ENCODE measurements at regions of chr6 and their contacts with region 1.

Region 1: DNA sequence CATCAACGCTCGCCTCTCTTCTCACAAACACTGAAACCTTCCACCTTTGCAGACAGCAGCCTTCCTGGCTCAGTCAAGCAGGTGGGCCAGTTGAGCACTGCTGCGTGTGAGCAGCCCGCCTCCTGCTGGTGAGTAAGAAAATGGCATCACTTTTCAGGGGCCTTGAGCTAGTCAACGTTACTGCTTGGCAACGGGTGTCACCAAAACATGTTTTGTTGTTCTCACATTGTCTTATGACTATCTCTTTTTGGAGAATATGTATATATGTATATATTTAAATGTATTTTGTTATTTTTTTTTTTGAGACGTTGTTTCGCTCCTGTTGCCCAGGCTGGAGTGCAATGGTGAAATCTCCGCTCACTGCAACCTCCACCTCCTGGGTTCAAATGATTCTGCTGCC is 97.0 kb upstream of the AGPAT4 start:
- DNase-seq: peak; percentile 71
- ATAC-seq: peak; percentile 81
- H3K4me3 ChIP-seq: no peak overlapping the region
- H3K27ac ChIP-seq: no peak overlapping the region
- H3K4me1 ChIP-seq: no peaks in the 10 kb centered on the region
- H3K27me3 ChIP-seq: no peaks in the 10 kb centered on the region
- CTCF ChIP-seq: peak; percentile 94
- POLR2A ChIP-seq: peak; percentile 29; the same call in 1 of the 2 replicates
- RAD21 ChIP-seq: peak; percentile 96

Region 2: DNA sequence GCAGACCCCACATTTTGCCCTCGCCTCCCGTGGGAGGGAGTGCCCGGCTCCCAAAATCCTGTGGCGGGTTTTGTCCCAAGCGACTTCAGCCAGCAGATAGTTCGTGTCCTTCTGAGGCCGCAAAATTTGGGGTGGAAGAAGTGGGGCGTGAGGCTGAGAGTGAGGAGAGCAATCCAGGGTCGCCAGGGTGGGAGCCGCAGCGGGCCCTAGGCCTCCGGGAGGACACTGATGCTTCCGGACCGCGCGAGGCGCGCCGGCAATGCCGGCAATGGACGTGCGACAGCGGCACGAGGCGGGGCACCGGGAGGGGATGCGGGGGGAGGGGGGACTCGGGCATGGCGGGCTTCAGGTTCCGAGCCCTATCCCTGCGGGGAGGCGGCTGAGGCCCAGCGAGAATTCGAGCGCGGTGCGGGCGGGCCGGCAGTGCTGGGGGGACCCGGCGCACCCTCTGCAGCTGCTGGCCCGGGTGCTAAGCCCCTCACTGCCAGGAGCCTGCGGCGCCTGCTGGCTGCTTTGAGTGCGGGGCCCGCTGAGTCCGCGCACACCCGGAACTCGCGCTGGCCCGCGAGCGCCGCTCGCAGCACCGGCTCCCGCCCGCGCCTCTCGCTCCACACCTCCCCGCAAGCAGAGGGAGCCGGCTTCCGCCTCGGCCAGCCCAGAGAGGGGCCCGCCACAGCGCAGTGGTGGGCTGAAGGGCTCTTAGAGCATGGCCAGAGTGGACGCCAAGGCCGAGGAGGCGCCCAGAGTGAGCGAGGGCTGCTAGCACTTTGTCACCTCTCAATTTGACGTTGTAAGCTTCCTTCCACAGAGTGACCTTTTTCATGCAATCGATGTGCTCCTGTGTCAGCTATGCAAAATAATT is 850.6 kb before region 1 on chr6:
- CTCF ChIA-PET with region 1: interaction called, 9 read pairs
- POLR2A ChIA-PET with region 1: no interaction called
- dilution Hi-C with region 1: no loop called
- in situ Hi-C with region 1: loop called (anchors 5 kb)
- intact Hi-C with region 1: loop called (anchors 1 kb)
- DNase-seq: peak; percentile 34
- ATAC-seq: peak; percentile 93
- H3K4me3 ChIP-seq: peak overlapping the region; percentile 60
- H3K27ac ChIP-seq: peak overlapping the region; percentile 3; the same call in 1 of the 2 replicates
- H3K4me1 ChIP-seq: no peaks in the 10 kb centered on the region
- H3K27me3 ChIP-seq: no peaks in the 10 kb centered on the region
- CTCF ChIP-seq: no peak; the same call in 1 of the 2 replicates
- POLR2A ChIP-seq: no peak
- RAD21 ChIP-seq: peak; percentile 68

Region 3: DNA sequence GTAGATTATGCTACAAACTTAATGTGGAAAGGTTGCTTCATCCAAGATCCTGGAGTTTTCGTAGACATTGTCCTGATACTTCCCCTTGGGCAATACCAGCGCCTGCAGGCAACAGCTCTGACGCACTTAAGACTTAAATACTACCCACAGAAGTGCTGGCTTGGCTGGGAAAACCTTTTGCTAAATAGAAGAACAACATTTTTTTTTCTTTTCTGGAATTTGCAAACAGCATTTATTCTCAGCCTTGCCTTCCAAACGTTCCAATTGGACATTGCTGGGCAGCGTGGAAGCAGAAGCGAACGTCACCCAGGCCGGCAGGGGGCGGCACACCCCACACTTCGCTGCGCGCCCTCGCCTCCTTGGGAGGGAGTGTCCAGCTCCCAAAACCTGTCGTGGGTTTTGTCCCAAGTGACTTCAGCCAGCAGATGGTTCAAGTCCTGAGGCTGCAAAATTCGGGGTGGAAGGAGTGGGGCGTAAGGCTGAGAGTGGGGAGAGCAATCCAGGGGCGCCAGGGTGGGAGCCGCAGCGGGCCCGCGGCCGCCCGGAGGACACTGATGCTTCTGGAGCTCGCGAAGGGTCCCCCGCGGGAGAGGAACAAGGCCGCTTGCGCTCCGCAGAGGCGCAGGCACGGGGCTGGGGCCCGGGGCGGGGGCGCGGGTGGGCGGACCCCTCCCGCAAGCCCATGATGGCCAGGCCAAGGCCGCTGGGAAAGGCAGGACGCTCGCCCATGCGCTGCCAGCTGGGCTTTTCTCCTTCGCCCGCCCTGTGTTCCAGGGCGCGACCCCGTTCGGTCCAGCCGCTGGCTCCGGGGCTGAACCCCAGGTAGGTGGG is 440.1 kb before region 1 on chr6:
- CTCF ChIA-PET with region 1: interaction called, 42 read pairs
- POLR2A ChIA-PET with region 1: no interaction called
- dilution Hi-C with region 1: no loop called
- in situ Hi-C with region 1: loop called (anchors 5 kb)
- intact Hi-C with region 1: loop called (anchors 1 kb)
- DNase-seq: peak; percentile 71
- ATAC-seq: peak; percentile 99
- H3K4me3 ChIP-seq: peak overlapping the region; percentile 46
- H3K27ac ChIP-seq: no peak overlapping the region
- H3K4me1 ChIP-seq: no peaks in the 10 kb centered on the region
- H3K27me3 ChIP-seq: no peaks in the 10 kb centered on the region
- CTCF ChIP-seq: peak; percentile 97
- POLR2A ChIP-seq: peak; percentile 45; the same call in 1 of the 2 replicates
- RAD21 ChIP-seq: peak; percentile 98

Region 4: GRCh38 chr6:160992061-160992979 is 378.6 kb before region 1 on chr6:
- CTCF ChIA-PET with region 1: interaction called, 3 read pairs
- POLR2A ChIA-PET with region 1: no interaction called
- dilution Hi-C with region 1: no loop called
- in situ Hi-C with region 1: no loop called
- intact Hi-C with region 1: loop called (anchors 2 kb)
- DNase-seq: peak; percentile 70
- ATAC-seq: peak; percentile 57
- H3K4me3 ChIP-seq: peak overlapping the region; percentile 95
- H3K27ac ChIP-seq: peak overlapping the region; percentile 84
- H3K4me1 ChIP-seq: no peaks in the 10 kb centered on the region; the same call in 1 of the 2 replicates
- H3K27me3 ChIP-seq: no peaks in the 10 kb centered on the region
- CTCF ChIP-seq: peak; percentile 63
- POLR2A ChIP-seq: peak; percentile 80; the same call in 1 of the 2 replicates
- RAD21 ChIP-seq: peak; percentile 67

Region 5: GRCh38 chr6:161101517-161101916 is 269.4 kb before region 1 on chr6:
- CTCF ChIA-PET with region 1: interaction called, 11 read pairs
- POLR2A ChIA-PET with region 1: no interaction called
- dilution Hi-C with region 1: no loop called
- in situ Hi-C with region 1: no loop called
- intact Hi-C with region 1: loop called (anchors 1 kb)
- DNase-seq: peak; percentile 17
- ATAC-seq: no peak
- H3K4me3 ChIP-seq: no peak overlapping the region
- H3K27ac ChIP-seq: no peak overlapping the region
- H3K4me1 ChIP-seq: peaks cover 2% of the 10 kb centered on the region; the same call in 1 of the 2 replicates
- H3K27me3 ChIP-seq: no peaks in the 10 kb centered on the region
- CTCF ChIP-seq: peak; percentile 40
- POLR2A ChIP-seq: no peak
- RAD21 ChIP-seq: peak; percentile 57

Region 6: GRCh38 chr6:161152907-161153662 is 217.8 kb before region 1 on chr6:
- CTCF ChIA-PET with region 1: interaction called, 4 read pairs
- POLR2A ChIA-PET with region 1: no interaction called
- dilution Hi-C with region 1: no loop called
- in situ Hi-C with region 1: loop called (anchors 10 kb)
- intact Hi-C with region 1: loop called (anchors 1 kb)
- DNase-seq: no peak
- ATAC-seq: 0 out of 2 replicates have a peak, but pooled peaks have one; percentile 37
- H3K4me3 ChIP-seq: no peak overlapping the region
- H3K27ac ChIP-seq: no peak overlapping the region
- H3K4me1 ChIP-seq: no peaks in the 10 kb centered on the region
- H3K27me3 ChIP-seq: no peaks in the 10 kb centered on the region
- CTCF ChIP-seq: peak; percentile 39
- POLR2A ChIP-seq: no peak
- RAD21 ChIP-seq: peak; percentile 66

Region 7: DNA sequence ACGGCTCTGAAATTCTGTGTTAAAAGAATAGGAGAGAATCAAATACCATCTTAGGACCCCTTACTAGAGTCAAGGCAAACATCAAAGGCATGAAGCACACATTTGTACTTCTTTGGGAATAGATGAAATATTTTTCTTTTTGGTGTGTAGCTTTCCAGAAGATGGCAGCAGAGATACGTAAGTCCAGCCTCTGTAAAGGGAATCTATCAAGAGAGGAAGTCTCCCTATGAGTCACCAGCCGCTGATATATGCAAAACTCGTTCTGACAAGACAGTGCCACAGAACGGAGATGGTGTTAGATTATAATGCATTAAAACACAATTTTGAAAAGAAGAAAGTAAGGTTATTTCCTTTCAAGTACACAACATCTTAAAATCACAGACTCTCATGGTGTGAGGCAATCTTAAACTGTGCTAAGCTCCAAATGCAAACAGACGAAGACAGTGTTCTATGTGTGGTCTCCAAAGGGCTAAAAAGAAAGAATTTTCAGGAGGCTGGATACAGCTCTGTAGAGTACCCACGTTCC is 23.0 kb after region 1 on chr6:
- CTCF ChIA-PET with region 1: no interaction called
- POLR2A ChIA-PET with region 1: no interaction called
- dilution Hi-C with region 1: no loop called
- in situ Hi-C with region 1: no loop called
- intact Hi-C with region 1: no loop called
- DNase-seq: peak; percentile 90
- ATAC-seq: peak; percentile 98
- H3K4me3 ChIP-seq: no peak overlapping the region
- H3K27ac ChIP-seq: no peak overlapping the region
- H3K4me1 ChIP-seq: no peaks in the 10 kb centered on the region
- H3K27me3 ChIP-seq: no peaks in the 10 kb centered on the region; the same call in 1 of the 2 replicates
- CTCF ChIP-seq: peak; percentile 81
- POLR2A ChIP-seq: no peak
- RAD21 ChIP-seq: peak; percentile 88

Region 8: GRCh38 chr6:161596807-161597520 is 226.1 kb after region 1 on chr6:
- CTCF ChIA-PET with region 1: no interaction called
- POLR2A ChIA-PET with region 1: no interaction called
- dilution Hi-C with region 1: no loop called
- in situ Hi-C with region 1: no loop called
- intact Hi-C with region 1: no loop called
- DNase-seq: no peak
- ATAC-seq: no peak
- H3K4me3 ChIP-seq: no peak overlapping the region
- H3K27ac ChIP-seq: no peak overlapping the region
- H3K4me1 ChIP-seq: no peaks in the 10 kb centered on the region
- H3K27me3 ChIP-seq: no peaks in the 10 kb centered on the region
- CTCF ChIP-seq: no peak
- POLR2A ChIP-seq: no peak
- RAD21 ChIP-seq: no peak

Region 9: GRCh38 chr6:161870236-161870901 is 499.5 kb after region 1 on chr6:
- CTCF ChIA-PET with region 1: no interaction called
- POLR2A ChIA-PET with region 1: no interaction called
- dilution Hi-C with region 1: no loop called
- in situ Hi-C with region 1: no loop called
- intact Hi-C with region 1: no loop called
- DNase-seq: no peak
- ATAC-seq: no peak
- H3K4me3 ChIP-seq: no peak overlapping the region
- H3K27ac ChIP-seq: no peak overlapping the region
- H3K4me1 ChIP-seq: no peaks in the 10 kb centered on the region
- H3K27me3 ChIP-seq: no peaks in the 10 kb centered on the region
- CTCF ChIP-seq: no peak
- POLR2A ChIP-seq: no peak
- RAD21 ChIP-seq: no peak